Activated CD8-positive, alpha-beta T cell treated with anti-CD3 and anti-CD28 coated beads for 36 hours (primary cell): ENCODE measurements at regions of chr1 and their contacts with region 1.

Region 1: DNA sequence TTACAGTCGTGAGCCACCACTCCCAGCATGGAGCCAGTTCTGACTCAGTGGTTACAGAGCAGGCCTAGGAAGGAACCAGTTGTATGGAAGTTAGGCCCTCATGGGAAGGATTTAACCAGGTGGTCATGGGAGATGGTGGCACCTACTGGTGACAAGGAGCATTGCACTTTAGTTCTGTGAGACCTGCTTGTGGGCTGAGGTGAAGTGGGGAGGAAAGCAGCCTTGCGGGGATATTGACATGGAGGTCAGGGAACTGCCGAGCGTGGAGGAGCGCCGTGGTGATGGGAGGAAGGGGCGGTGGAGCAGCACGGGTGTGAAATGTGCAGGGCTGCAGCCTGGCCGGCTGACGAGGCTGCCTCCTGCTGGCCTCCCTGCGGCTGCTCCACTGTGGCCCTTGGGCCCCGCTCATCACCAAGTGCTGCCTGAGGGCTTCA is 100.4 kb downstream of the GALNT2 start:
- DNase-seq: peak; percentile 48
- ATAC-seq: peak; percentile 75
- H3K4me3 Mint-ChIP-seq: no peak overlapping the region
- H3K27ac Mint-ChIP-seq: peak overlapping the region; percentile 39
- H3K4me1 Mint-ChIP-seq: peaks cover 42% of the 10 kb centered on the region
- H3K27me3 Mint-ChIP-seq: no peaks in the 10 kb centered on the region
- CTCF ChIP-seq: peak; percentile 80

Region 2: GRCh38 chr1:229661022-229661877 is 506.2 kb before region 1 on chr1:
- CTCF ChIA-PET with region 1: interaction called, 21 read pairs
- POLR2A ChIA-PET with region 1: no interaction called
- intact Hi-C with region 1: no loop called
- DNase-seq: peak; percentile 76
- ATAC-seq: peak; percentile 78
- H3K4me3 Mint-ChIP-seq: no peak overlapping the region
- H3K27ac Mint-ChIP-seq: no peak overlapping the region
- H3K4me1 Mint-ChIP-seq: peaks cover 15% of the 10 kb centered on the region
- H3K27me3 Mint-ChIP-seq: no peaks in the 10 kb centered on the region
- CTCF ChIP-seq: peak; percentile 92

Region 3: GRCh38 chr1:230145953-230146476 is 21.4 kb before region 1 on chr1:
- CTCF ChIA-PET with region 1: interaction called, 10 read pairs
- POLR2A ChIA-PET with region 1: no interaction called
- intact Hi-C with region 1: no loop called
- DNase-seq: no peak
- ATAC-seq: no peak
- H3K4me3 Mint-ChIP-seq: no peak overlapping the region
- H3K27ac Mint-ChIP-seq: peak overlapping the region; percentile 50
- H3K4me1 Mint-ChIP-seq: peaks cover 59% of the 10 kb centered on the region
- H3K27me3 Mint-ChIP-seq: no peaks in the 10 kb centered on the region
- CTCF ChIP-seq: no peak

Region 4: DNA sequence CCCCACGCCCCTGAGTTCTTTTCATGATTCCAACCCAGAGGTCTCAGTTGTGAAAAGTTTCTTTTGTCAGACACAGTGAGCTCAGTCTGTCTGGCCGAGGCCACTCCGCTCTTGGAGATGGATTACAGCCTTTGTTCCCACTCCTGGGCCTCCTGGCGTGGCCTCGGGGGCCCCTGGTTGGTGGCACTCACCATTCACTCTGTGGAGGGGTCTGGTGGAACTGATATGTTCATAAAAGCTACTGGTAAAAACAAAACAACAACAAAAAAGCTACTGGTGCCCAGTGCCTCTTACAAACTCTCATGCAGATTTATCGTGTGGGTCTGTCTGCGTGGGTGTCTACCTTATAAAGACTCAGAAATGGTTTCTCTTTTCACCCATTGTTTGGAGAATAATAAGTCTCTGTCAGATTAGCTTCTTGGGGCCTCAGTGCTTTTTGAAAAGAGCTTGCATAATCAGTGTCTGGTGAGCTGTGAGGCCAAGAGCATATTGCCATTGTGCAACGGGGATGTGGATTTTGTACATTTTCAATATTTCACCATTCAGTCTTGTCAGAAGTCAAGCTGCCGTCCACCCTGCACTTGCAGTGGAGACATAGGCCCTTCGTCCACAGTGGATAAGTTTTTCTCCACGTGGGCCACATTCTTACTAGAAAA is 13.7 kb before region 1 on chr1:
- CTCF ChIA-PET with region 1: interaction called, 13 read pairs
- POLR2A ChIA-PET with region 1: no interaction called
- intact Hi-C with region 1: no loop called
- DNase-seq: no peak
- ATAC-seq: no peak
- H3K4me3 Mint-ChIP-seq: no peak overlapping the region
- H3K27ac Mint-ChIP-seq: no peak overlapping the region
- H3K4me1 Mint-ChIP-seq: peaks cover 57% of the 10 kb centered on the region
- H3K27me3 Mint-ChIP-seq: no peaks in the 10 kb centered on the region
- CTCF ChIP-seq: no peak

Region 5: GRCh38 chr1:230263568-230264195 is 96.2 kb after region 1 on chr1:
- CTCF ChIA-PET with region 1: no interaction called
- POLR2A ChIA-PET with region 1: no interaction called
- intact Hi-C with region 1: no loop called
- DNase-seq: no peak
- ATAC-seq: no peak
- H3K4me3 Mint-ChIP-seq: no peak overlapping the region
- H3K27ac Mint-ChIP-seq: no peak overlapping the region
- H3K4me1 Mint-ChIP-seq: peaks cover under 1% of the 10 kb centered on the region
- H3K27me3 Mint-ChIP-seq: no peaks in the 10 kb centered on the region
- CTCF ChIP-seq: no peak